Gastrocnemius medialis (tissue), 4 donors: ENCODE measurements at regions of chr12 and their contacts with region 1.

Region 1: GRCh38 chr12:93766796-93767523 is 89.8 kb downstream of the CRADD start:
- DNase-seq: peak; percentile 23 to 45
- ATAC-seq: peak; percentile 79 to 85
- H3K4me3 ChIP-seq: peak overlapping the region in 2 of 4 donors; percentile 4
- H3K27ac ChIP-seq: peak overlapping the region; percentile 51 to 73 (median 66)
- H3K4me1 ChIP-seq: peaks cover 33 to 38% of the 10 kb centered on the region in 2 donors
- H3K27me3 ChIP-seq: no peaks in the 10 kb centered on the region
- CTCF ChIP-seq: peak; percentile 51 to 77 (median 61)
- POLR2A ChIP-seq: no peak

Region 2: DNA sequence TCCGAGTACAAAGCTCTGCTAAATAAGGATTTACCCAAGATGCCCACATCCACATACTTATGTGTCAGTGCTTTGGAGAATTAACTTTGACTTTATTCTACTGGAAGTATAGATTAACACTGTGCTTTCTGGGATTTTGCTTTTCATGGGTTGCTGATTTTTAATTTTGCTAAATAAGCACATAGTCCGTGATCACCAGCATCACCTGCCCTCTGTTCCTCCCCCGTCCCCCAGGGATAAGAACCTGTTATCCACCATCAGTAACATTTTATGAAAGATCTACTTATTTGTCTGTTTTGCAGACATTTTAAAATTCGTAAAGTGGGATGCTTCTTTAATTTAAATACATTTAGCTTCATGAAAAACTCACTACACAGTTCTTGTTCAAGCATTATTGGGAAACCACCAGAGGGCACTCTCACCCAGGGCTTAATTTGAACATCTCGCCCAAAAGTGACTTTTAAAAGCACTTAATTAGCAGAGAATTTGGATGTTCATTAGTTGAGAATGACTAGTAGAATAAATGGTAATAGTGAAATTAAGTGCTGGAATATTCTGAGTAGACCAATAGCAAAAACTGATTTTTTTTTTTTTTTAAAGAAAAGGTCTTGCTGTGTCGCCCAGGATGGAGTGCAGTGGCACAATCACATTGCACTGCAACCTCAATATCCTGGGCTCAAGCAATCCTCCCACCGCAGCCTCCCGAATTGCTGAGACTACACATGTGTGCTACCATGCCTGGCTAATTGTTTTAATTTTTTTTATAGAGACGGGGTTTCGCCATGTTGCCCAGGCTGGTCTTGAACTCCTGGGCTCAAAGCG is 263.9 kb before region 1 on chr12:
- in situ Hi-C with region 1: no loop called
- intact Hi-C with region 1: loop called (anchors 10 kb)
- DNase-seq: no peak
- ATAC-seq: no peak
- H3K4me3 ChIP-seq: no peak overlapping the region
- H3K27ac ChIP-seq: no peak overlapping the region
- H3K4me1 ChIP-seq: no peaks in the 10 kb centered on the region
- H3K27me3 ChIP-seq: no peaks in the 10 kb centered on the region
- CTCF ChIP-seq: peak; percentile 49 to 79 (median 71)
- POLR2A ChIP-seq: no peak

Region 3: DNA sequence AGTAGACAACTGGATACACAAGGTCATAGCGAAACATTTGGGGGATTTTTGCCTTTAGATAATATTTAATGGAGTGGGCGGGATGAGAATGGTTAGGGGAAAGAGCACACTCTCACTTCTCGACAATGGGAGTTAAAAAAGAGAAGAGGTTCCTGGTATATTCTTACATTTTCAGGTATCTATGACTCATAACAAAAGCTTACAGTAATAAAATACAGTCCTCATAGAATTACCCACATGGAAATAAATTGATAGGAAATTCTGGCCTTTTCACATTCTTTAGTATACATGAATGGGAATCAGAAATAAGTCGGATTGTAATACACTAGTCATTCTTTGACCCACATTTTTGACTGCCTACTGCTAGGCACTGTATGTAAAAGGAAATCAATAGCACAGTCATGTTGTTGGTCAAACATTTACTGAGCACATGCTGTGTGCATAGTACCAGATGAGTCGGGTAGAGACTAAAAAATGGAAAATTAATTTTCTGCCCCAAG is 98.0 kb before region 1 on chr12:
- in situ Hi-C with region 1: no loop called
- intact Hi-C with region 1: no loop called
- DNase-seq: no peak
- ATAC-seq: no peak
- H3K4me3 ChIP-seq: no peak overlapping the region
- H3K27ac ChIP-seq: no peak overlapping the region
- H3K4me1 ChIP-seq: peaks cover 5 to 8% of the 10 kb centered on the region in 2 donors
- H3K27me3 ChIP-seq: no peaks in the 10 kb centered on the region
- CTCF ChIP-seq: no peak
- POLR2A ChIP-seq: no peak

Region 4: GRCh38 chr12:93802698-93803423 is 35.9 kb after region 1 on chr12:
- in situ Hi-C with region 1: no loop called
- intact Hi-C with region 1: loop called (anchors 1 kb)
- DNase-seq: no peak
- ATAC-seq: peak; percentile 74 to 82
- H3K4me3 ChIP-seq: peak overlapping the region in 3 of 4 donors; percentile 18 to 35 (median 24)
- H3K27ac ChIP-seq: peak overlapping the region; percentile 67 to 83 (median 76)
- H3K4me1 ChIP-seq: peaks cover 22 to 37% of the 10 kb centered on the region in 2 donors
- H3K27me3 ChIP-seq: no peaks in the 10 kb centered on the region
- CTCF ChIP-seq: peak in 4 of 5 experiments; percentile 3 to 40 (median 18)
- POLR2A ChIP-seq: no peak

Region 5: DNA sequence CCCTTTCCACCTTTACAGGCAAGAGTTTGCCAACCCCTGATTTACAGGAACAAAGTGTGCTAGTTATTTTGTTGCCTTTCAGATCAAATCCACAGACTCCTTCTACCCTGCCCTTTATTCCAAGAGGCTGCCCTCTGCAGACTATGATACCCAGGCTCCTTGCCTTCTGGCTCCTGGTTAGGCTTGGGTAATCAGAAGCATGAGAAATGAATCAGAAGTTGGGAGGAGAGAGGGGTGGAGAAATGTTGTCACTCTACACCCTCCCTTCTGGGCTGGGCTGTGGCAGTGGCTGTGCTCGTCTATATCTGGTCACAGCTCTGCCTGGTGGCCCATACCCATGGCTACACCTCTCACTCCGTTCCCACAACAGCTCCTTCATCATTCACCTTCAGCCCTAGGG is 176.8 kb after region 1 on chr12:
- in situ Hi-C with region 1: no loop called
- intact Hi-C with region 1: loop called (anchors 5 kb)
- DNase-seq: peak; percentile 75 to 87
- ATAC-seq: peak; percentile 99 to 100
- H3K4me3 ChIP-seq: no peak overlapping the region
- H3K27ac ChIP-seq: peak overlapping the region; percentile 63 to 81 (median 72)
- H3K4me1 ChIP-seq: peaks cover 6 to 9% of the 10 kb centered on the region in 2 donors
- H3K27me3 ChIP-seq: no peaks in the 10 kb centered on the region
- CTCF ChIP-seq: peak; percentile 34 to 49 (median 42)
- POLR2A ChIP-seq: peak in 1 of 2 donors; percentile 41

Region 6: GRCh38 chr12:93979189-93979588 is 212.2 kb after region 1 on chr12:
- in situ Hi-C with region 1: no loop called
- intact Hi-C with region 1: loop called (anchors 2 kb)
- DNase-seq: no peak
- ATAC-seq: no peak
- H3K4me3 ChIP-seq: no peak overlapping the region
- H3K27ac ChIP-seq: peak overlapping the region in 1 of 4 donors; percentile 15
- H3K4me1 ChIP-seq: peaks cover 4 to 13% of the 10 kb centered on the region in 2 donors
- H3K27me3 ChIP-seq: no peaks in the 10 kb centered on the region
- CTCF ChIP-seq: peak in 4 of 5 experiments; percentile 35 to 48 (median 42)
- POLR2A ChIP-seq: no peak

Region 7: DNA sequence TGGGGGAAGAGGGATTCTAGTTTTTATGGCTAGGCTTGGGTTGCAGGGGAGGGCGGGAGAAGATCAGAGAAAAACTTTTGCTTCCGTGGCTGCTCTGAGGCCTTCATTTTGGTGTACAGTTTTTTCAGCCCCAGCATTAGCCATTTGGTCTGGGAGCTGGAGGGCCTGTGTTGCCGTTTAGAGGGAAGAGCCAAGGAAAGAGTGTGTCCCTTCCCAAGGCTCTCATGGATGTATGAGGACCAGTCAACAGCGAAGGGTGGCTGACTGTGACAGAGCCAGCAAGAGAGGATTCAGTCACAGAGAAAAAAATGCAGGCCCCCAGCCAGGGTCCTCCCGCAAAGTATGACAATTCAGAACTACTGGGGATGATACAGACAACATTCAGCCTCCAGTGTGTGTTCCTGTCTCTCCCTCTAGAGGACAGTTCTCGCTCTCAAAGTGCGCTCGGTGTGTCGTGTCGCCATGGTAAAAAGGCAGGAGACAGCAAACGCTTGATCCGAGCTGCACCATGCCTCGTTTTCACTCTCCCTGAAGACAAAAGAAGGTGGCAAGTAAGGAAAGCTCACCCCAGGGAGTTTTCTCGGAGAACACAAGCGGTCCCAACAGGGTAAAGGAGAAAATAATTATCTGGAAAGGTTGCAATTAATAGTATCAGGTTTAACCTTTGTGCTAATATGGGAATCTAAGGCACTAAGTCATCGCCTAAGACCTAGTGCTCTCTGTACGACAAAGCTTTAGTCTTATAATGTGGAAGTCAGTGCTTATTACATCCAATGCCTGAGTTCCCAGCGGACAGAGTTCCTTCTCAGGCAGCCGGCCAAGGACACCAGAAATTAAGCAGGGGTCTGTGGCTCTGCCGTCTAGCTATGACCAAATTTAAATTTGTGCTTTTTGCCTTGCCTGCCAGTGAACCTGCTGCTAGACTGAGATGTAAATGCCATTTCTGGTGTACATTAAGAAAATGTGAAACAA is 224.2 kb after region 1 on chr12:
- in situ Hi-C with region 1: no loop called
- intact Hi-C with region 1: loop called (anchors 5 kb)
- DNase-seq: peak; percentile 56 to 62
- ATAC-seq: peak; percentile 96 to 98
- H3K4me3 ChIP-seq: peak overlapping the region in 3 of 4 donors; percentile 5 to 42 (median 20)
- H3K27ac ChIP-seq: peak overlapping the region in 2 of 4 donors; percentile 15 to 62
- H3K4me1 ChIP-seq: peaks cover 6 to 9% of the 10 kb centered on the region in 2 donors
- H3K27me3 ChIP-seq: no peaks in the 10 kb centered on the region
- CTCF ChIP-seq: peak; percentile 29 to 69 (median 35)
- POLR2A ChIP-seq: no peak